CD4-positive, alpha-beta T cell (primary cell): ENCODE measurements at regions of chr11 and their contacts with region 1.

Region 1: GRCh38 chr11:67572747-67573419 is 10.7 kb upstream of the GSTP1 start:
- DNase-seq: peak in 8 of 14 experiments; percentile 15 to 68 (median 30)
- ATAC-seq: no peak
- H3K4me3 ChIP-seq: no peak overlapping the region
- H3K4me3 Mint-ChIP-seq: no peak overlapping the region
- H3K27ac ChIP-seq: no peak overlapping the region
- H3K27ac Mint-ChIP-seq: no peak overlapping the region
- H3K4me1 ChIP-seq: no peaks in the 10 kb centered on the region
- H3K4me1 Mint-ChIP-seq: no peaks in the 10 kb centered on the region
- H3K27me3 ChIP-seq: peaks cover 3 to 9% of the 10 kb centered on the region in 2 experiments
- H3K27me3 Mint-ChIP-seq: peaks cover 41% of the 10 kb centered on the region
- CTCF ChIP-seq: peak; percentile 74

Region 2: GRCh38 chr11:67053896-67054842 is 518.7 kb before region 1 on chr11:
- CTCF ChIA-PET with region 1: no interaction called
- POLR2A ChIA-PET with region 1: no interaction called
- intact Hi-C with region 1: no loop called
- DNase-seq: peak in 13 of 14 experiments; percentile 9 to 64 (median 29)
- ATAC-seq: peak; percentile 76
- H3K4me3 ChIP-seq: no peak overlapping the region
- H3K4me3 Mint-ChIP-seq: no peak overlapping the region
- H3K27ac ChIP-seq: no peak overlapping the region
- H3K27ac Mint-ChIP-seq: no peak overlapping the region
- H3K4me1 ChIP-seq: peaks cover 21% of the 10 kb centered on the region
- H3K4me1 Mint-ChIP-seq: peaks cover 16% of the 10 kb centered on the region
- H3K27me3 ChIP-seq: peaks cover 3 to 9% of the 10 kb centered on the region in 2 experiments
- H3K27me3 Mint-ChIP-seq: peaks cover 8% of the 10 kb centered on the region
- CTCF ChIP-seq: peak; percentile 48

Region 3: DNA sequence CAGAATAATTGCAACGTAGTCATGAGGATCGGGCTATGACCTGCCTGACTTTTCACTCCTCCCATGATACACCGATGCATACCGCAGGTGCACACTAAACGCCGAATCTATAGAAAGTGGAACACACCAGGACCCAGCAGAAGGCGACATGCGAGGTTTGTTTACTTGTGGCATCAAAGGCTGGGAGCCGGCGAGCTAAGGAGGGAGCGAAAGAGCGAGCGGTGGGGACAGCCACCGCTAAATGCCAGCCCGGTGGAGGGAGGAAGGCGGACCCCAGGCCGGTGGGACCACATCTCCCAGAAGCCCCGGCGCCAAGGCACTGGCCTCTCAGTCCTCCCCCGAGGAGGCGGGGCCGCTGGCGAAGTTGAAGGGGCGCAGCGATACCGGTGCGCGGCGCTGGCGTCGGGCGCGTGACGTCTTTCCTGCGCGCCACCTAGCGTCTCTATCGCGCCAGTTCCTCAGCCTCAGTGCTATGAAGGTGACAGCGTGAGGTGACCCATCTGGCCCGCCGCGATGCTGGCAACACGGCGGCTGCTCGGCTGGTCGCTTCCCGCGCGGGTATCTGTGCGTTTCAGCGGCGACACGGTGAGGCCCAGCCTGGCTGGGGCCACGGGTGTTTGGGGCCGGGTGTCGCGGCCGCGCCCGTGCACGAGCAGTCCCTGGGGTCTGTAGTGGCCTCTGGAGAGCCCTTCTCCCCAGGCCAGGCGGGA is 33.8 kb after region 1 on chr11 and contains the start of gene NDUFV1:
- CTCF ChIA-PET with region 1: no interaction called
- POLR2A ChIA-PET with region 1: no interaction called
- intact Hi-C with region 1: loop called in 1 of 2 experiments (anchors 5 kb)
- DNase-seq: peak; percentile 93 to 98 (median 96)
- ATAC-seq: peak; percentile 98
- H3K4me3 ChIP-seq: peak within 1 kb of the TSS; percentile 83
- H3K4me3 Mint-ChIP-seq: peak within 1 kb of the TSS; percentile 88
- H3K27ac ChIP-seq: peak within 1 kb of the TSS; percentile 64 to 79
- H3K27ac Mint-ChIP-seq: peak within 1 kb of the TSS; percentile 70
- H3K4me1 ChIP-seq: peaks cover 23% of the 10 kb centered on the region
- H3K4me1 Mint-ChIP-seq: peaks cover 9% of the 10 kb centered on the region
- H3K27me3 ChIP-seq: peaks cover 0 to 3% of the 10 kb centered on the region in 2 experiments
- H3K27me3 Mint-ChIP-seq: peaks cover 11% of the 10 kb centered on the region
- CTCF ChIP-seq: peak; percentile 81
- total RNA-seq, gene NDUFV1: 223 to 224 TPM

Region 4: DNA sequence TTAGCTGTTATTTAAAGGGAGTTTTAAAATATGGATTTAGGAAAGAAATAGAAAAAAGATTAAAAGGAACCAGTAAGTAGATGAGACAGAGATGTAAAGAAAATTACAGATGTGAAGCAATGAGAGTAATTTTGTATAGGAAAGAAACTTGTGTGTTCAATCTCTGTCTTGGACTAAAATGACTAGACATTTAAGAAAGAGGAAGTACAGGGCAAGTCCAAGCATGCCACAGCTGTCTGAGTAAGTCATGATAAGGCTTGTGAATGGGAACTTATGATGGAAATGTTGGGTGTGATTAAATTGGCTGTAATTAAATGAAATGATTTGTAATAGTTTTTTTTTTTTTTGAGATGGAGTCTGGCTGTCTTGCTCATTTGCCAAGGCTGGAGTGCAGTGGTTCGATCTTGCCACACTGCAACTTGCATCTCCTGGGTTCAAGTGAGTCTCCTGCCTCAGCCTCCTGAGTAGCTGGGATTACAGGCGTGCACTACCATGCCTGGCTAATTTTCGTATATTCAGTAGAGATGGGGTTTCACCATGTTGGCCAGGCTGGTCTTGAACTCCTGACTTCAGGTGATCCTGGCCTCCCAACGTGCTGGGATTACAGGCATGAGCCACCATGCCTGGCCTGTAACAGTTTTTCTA is 83.5 kb after region 1 on chr11:
- CTCF ChIA-PET with region 1: no interaction called
- POLR2A ChIA-PET with region 1: no interaction called
- intact Hi-C with region 1: loop called in 1 of 2 experiments (anchors 2 kb)
- DNase-seq: peak in 1 of 14 experiments; percentile 14
- ATAC-seq: no peak
- H3K4me3 ChIP-seq: no peak overlapping the region
- H3K4me3 Mint-ChIP-seq: no peak overlapping the region
- H3K27ac ChIP-seq: no peak overlapping the region
- H3K27ac Mint-ChIP-seq: no peak overlapping the region
- H3K4me1 ChIP-seq: peaks cover 3% of the 10 kb centered on the region
- H3K4me1 Mint-ChIP-seq: no peaks in the 10 kb centered on the region
- H3K27me3 ChIP-seq: no peaks in the 10 kb centered on the region
- H3K27me3 Mint-ChIP-seq: no peaks in the 10 kb centered on the region
- CTCF ChIP-seq: no peak